Activated CD8-positive, alpha-beta T cell treated with anti-CD3 and anti-CD28 coated beads for 36 hours (primary cell): ENCODE measurements at regions of chr4 and their contacts with region 1.

Region 1: DNA sequence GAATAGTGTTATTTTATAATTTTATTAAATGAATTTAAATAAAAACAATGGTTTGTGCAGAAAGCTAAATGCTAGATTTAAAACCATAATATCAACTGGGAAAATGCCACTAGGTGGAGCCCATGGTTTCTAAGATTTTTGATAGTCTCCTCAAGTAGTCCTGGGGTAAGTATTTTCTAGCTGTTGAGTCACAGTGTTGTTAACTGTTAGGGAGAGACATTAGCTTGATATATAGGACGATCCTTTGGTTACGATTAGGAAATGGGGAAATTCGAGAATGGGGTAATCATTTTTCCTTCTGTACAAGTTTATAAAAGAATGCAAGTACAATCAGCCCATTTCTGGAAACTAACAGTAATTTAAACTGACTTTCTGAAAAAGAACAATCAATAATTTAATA is 378.4 kb downstream of the ANKRD50 start:
- DNase-seq: peak; percentile 39
- ATAC-seq: no peak
- H3K4me3 Mint-ChIP-seq: no peak overlapping the region
- H3K27ac Mint-ChIP-seq: no peak overlapping the region
- H3K4me1 Mint-ChIP-seq: no peaks in the 10 kb centered on the region
- H3K27me3 Mint-ChIP-seq: peaks cover 2% of the 10 kb centered on the region
- CTCF ChIP-seq: peak; percentile 29

Region 2: GRCh38 chr4:124278291-124278876 is 55.7 kb before region 1 on chr4:
- CTCF ChIA-PET with region 1: no interaction called
- POLR2A ChIA-PET with region 1: no interaction called
- intact Hi-C with region 1: no loop called
- DNase-seq: no peak
- ATAC-seq: no peak
- H3K4me3 Mint-ChIP-seq: no peak overlapping the region
- H3K27ac Mint-ChIP-seq: no peak overlapping the region
- H3K4me1 Mint-ChIP-seq: no peaks in the 10 kb centered on the region
- H3K27me3 Mint-ChIP-seq: peaks cover 6% of the 10 kb centered on the region
- CTCF ChIP-seq: no peak

Region 3: DNA sequence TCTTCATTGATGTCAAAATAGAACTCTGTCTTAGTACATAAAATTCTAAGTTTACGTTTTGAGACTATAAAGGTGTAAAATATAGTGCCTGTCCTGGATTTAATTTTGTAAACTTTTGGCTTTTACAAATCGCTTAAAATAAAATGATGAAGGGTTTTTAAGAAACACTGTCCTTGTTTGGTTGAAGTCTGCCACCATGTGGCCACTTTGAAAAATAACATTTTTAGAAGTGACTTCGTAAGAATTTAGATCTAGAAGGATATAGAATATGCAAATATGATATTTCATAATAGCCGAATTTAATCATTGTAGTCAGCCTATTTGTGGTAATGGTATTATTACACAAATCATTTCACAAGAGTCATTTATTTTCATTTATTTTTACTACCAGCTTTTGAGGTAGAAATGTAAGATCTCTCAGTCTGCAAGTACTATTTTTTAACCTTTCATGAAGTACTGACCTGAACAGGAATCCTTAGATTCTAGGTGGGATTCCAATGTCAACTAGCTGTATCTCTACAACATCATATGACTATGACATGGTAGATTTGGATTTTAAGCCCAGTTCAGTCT is 949.7 kb after region 1 on chr4:
- CTCF ChIA-PET with region 1: interaction called, 25 read pairs
- POLR2A ChIA-PET with region 1: no interaction called
- intact Hi-C with region 1: loop called (anchors 5 kb)
- DNase-seq: no peak
- ATAC-seq: no peak
- H3K4me3 Mint-ChIP-seq: no peak overlapping the region
- H3K27ac Mint-ChIP-seq: no peak overlapping the region
- H3K4me1 Mint-ChIP-seq: no peaks in the 10 kb centered on the region
- H3K27me3 Mint-ChIP-seq: peaks cover 1% of the 10 kb centered on the region
- CTCF ChIP-seq: peak; percentile 71